Activated CD8-positive, alpha-beta T cell treated with anti-CD3 and anti-CD28 coated beads for 36 hours (primary cell): ENCODE measurements at regions of chr1 and their contacts with region 1.

Region 1: GRCh38 chr1:66436378-66437145 is 97.4 kb upstream of the SGIP1 start:
- DNase-seq: peak; percentile 87
- ATAC-seq: peak; percentile 95
- H3K4me3 Mint-ChIP-seq: no peak overlapping the region
- H3K27ac Mint-ChIP-seq: peak overlapping the region; percentile 52
- H3K4me1 Mint-ChIP-seq: peaks cover 41% of the 10 kb centered on the region
- H3K27me3 Mint-ChIP-seq: no peaks in the 10 kb centered on the region
- CTCF ChIP-seq: peak; percentile 81

Region 2: DNA sequence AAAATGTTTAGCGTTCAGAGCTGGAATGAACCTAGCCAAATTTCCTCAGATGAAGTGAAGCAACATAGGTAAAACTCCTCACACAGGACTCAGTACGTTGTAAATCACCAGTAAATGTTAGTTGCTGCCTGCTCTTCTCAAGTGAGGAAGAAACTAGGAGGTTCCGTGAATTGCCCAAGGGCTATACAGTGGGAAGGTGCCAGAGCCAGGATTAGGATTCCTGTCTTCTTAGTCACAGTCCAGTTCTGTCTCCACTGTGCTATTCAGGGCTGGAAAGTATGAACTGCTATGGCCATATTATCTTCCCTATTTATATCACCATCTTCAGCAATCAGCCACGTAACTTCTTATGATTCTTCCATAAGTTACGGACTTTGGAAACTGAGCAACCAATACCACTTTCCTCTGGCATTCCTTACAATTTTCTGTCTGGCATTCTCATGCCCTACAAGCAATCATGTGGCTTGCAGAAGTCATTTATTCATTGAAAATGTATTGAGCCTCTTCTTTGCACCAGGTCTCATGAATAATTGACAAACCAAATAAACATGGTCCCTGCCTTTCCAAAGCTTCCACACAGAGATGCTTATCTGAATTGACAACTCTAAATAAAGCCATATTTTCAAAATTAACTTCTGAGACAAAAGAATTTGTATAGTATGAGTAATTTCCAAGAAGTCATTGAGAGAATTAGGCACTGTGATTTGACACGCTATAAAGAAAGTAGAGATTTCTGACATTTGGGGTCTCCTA is 174.2 kb before region 1 on chr1:
- CTCF ChIA-PET with region 1: interaction called, 512 read pairs
- POLR2A ChIA-PET with region 1: interaction called, 3 read pairs
- intact Hi-C with region 1: no loop called
- DNase-seq: no peak
- ATAC-seq: no peak
- H3K4me3 Mint-ChIP-seq: no peak overlapping the region
- H3K27ac Mint-ChIP-seq: no peak overlapping the region
- H3K4me1 Mint-ChIP-seq: peaks cover 69% of the 10 kb centered on the region
- H3K27me3 Mint-ChIP-seq: no peaks in the 10 kb centered on the region
- CTCF ChIP-seq: no peak

Region 3: DNA sequence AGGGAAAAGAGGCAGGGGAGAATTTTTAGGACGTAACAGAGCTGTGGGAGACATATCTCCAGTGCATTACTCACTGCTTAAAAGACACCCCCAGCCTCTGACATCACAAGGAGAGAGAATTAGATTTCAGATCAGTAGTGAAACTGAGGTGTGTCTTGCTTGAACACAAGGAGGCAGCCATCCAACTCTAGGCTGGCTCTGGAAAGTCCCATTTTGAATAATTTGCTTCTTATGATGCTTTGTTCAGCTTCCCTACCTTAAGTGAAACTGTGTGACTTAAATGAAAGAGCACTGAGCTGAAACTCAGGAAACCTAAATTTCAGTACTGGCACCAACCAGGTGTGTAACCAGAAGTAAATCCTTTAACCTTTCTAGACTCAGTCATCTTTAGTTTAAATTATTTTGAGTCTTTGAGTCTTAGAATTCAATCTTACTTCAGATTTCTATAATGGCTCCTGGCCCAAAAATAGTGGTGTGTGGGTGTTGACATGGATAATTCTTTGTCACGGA is 154.2 kb before region 1 on chr1:
- CTCF ChIA-PET with region 1: interaction called, 10 read pairs
- POLR2A ChIA-PET with region 1: no interaction called
- intact Hi-C with region 1: loop called (anchors 5 kb)
- DNase-seq: peak; percentile 89
- ATAC-seq: peak; percentile 82
- H3K4me3 Mint-ChIP-seq: peak overlapping the region; percentile 14
- H3K27ac Mint-ChIP-seq: peak overlapping the region; percentile 93
- H3K4me1 Mint-ChIP-seq: peaks cover 90% of the 10 kb centered on the region
- H3K27me3 Mint-ChIP-seq: no peaks in the 10 kb centered on the region
- CTCF ChIP-seq: no peak

Region 4: GRCh38 chr1:66339944-66340343 is 96.6 kb before region 1 on chr1:
- CTCF ChIA-PET with region 1: interaction called, 12 read pairs
- POLR2A ChIA-PET with region 1: interaction called, 3 read pairs
- intact Hi-C with region 1: no loop called
- DNase-seq: no peak
- ATAC-seq: no peak
- H3K4me3 Mint-ChIP-seq: peak overlapping the region; percentile 68
- H3K27ac Mint-ChIP-seq: peak overlapping the region; percentile 89
- H3K4me1 Mint-ChIP-seq: peaks cover 70% of the 10 kb centered on the region
- H3K27me3 Mint-ChIP-seq: no peaks in the 10 kb centered on the region
- CTCF ChIP-seq: no peak

Region 5: GRCh38 chr1:66360285-66360724 is 76.3 kb before region 1 on chr1:
- CTCF ChIA-PET with region 1: interaction called, 43 read pairs
- POLR2A ChIA-PET with region 1: interaction called, 3 read pairs
- intact Hi-C with region 1: no loop called
- DNase-seq: peak; percentile 22
- ATAC-seq: peak; percentile 41
- H3K4me3 Mint-ChIP-seq: no peak overlapping the region
- H3K27ac Mint-ChIP-seq: no peak overlapping the region
- H3K4me1 Mint-ChIP-seq: peaks cover 88% of the 10 kb centered on the region
- H3K27me3 Mint-ChIP-seq: no peaks in the 10 kb centered on the region
- CTCF ChIP-seq: peak; percentile 79

Region 6: GRCh38 chr1:66380452-66381212 is 55.9 kb before region 1 on chr1:
- CTCF ChIA-PET with region 1: interaction called, 32 read pairs
- POLR2A ChIA-PET with region 1: interaction called, 4 read pairs
- intact Hi-C with region 1: no loop called
- DNase-seq: peak; percentile 51
- ATAC-seq: peak; percentile 84
- H3K4me3 Mint-ChIP-seq: no peak overlapping the region
- H3K27ac Mint-ChIP-seq: no peak overlapping the region
- H3K4me1 Mint-ChIP-seq: peaks cover 39% of the 10 kb centered on the region
- H3K27me3 Mint-ChIP-seq: no peaks in the 10 kb centered on the region
- CTCF ChIP-seq: no peak

Region 7: GRCh38 chr1:66413136-66413837 is 23.3 kb before region 1 on chr1:
- CTCF ChIA-PET with region 1: interaction called, 13 read pairs
- POLR2A ChIA-PET with region 1: interaction called, 6 read pairs
- intact Hi-C with region 1: no loop called
- DNase-seq: no peak
- ATAC-seq: peak; percentile 39
- H3K4me3 Mint-ChIP-seq: no peak overlapping the region
- H3K27ac Mint-ChIP-seq: no peak overlapping the region
- H3K4me1 Mint-ChIP-seq: peaks cover 38% of the 10 kb centered on the region
- H3K27me3 Mint-ChIP-seq: no peaks in the 10 kb centered on the region
- CTCF ChIP-seq: no peak